Aorta (tissue), 5 donors: ENCODE measurements at regions of chr11 and their contacts with region 1.

Region 1: GRCh38 chr11:41309716-41310115 is 149.7 kb downstream of the LRRC4C start:
- DNase-seq: no peak
- ATAC-seq: no peak
- H3K4me3 ChIP-seq: no peak overlapping the region
- H3K27ac ChIP-seq: no peak overlapping the region
- H3K4me1 ChIP-seq: no peaks in the 10 kb centered on the region
- H3K27me3 ChIP-seq: no peaks in the 10 kb centered on the region

Region 2: DNA sequence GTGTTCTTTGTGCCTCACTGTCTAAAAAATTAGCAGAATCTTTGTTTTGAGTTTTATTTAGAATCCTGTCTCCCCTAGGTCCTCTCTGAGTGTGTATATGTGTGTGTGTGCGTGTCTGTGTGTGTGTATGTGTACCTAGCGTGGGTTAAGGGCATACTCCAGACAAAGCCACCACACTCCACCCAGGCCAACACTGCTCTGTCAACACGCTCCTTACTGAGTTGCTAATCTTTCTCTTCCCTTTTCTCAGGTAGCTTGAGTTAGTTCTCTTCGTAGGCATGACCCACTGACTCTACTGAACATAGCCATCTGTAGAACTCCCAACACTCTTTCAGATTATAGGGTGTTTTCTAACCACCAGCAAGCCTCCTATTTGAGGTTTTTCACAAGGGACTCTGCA is 18.6 kb after region 1 on chr11:
- intact Hi-C with region 1: loop called in 1 of 2 experiments (anchors 2 kb)
- DNase-seq: no peak
- ATAC-seq: no peak
- H3K4me3 ChIP-seq: no peak overlapping the region
- H3K27ac ChIP-seq: no peak overlapping the region
- H3K4me1 ChIP-seq: no peaks in the 10 kb centered on the region
- H3K27me3 ChIP-seq: no peaks in the 10 kb centered on the region

Region 3: GRCh38 chr11:41659970-41660369 is 350.3 kb after region 1 on chr11:
- intact Hi-C with region 1: no loop called
- DNase-seq: no peak
- ATAC-seq: no peak
- H3K4me3 ChIP-seq: no peak overlapping the region
- H3K27ac ChIP-seq: no peak overlapping the region
- H3K4me1 ChIP-seq: no peaks in the 10 kb centered on the region
- H3K27me3 ChIP-seq: no peaks in the 10 kb centered on the region